Posterior vena cava (tissue), 2 donors: ENCODE measurements at regions of chr2 and their contacts with region 1.

Region 1: GRCh38 chr2:132955871-132956615 is 286.0 kb upstream of the LYPD1 start:
- DNase-seq: no peak

Region 2: GRCh38 chr2:131154071-131154531 is 1801.9 kb before region 1 on chr2:
- intact Hi-C with region 1: loop called in 1 of 2 experiments (anchors 5 kb)
- DNase-seq: no peak